Activated naive CD4-positive, alpha-beta T cell treated with anti-CD3 and anti-CD28 coated beads for 36 hours (primary cell): ENCODE measurements at regions of chr7 and their contacts with region 1.

Region 1: DNA sequence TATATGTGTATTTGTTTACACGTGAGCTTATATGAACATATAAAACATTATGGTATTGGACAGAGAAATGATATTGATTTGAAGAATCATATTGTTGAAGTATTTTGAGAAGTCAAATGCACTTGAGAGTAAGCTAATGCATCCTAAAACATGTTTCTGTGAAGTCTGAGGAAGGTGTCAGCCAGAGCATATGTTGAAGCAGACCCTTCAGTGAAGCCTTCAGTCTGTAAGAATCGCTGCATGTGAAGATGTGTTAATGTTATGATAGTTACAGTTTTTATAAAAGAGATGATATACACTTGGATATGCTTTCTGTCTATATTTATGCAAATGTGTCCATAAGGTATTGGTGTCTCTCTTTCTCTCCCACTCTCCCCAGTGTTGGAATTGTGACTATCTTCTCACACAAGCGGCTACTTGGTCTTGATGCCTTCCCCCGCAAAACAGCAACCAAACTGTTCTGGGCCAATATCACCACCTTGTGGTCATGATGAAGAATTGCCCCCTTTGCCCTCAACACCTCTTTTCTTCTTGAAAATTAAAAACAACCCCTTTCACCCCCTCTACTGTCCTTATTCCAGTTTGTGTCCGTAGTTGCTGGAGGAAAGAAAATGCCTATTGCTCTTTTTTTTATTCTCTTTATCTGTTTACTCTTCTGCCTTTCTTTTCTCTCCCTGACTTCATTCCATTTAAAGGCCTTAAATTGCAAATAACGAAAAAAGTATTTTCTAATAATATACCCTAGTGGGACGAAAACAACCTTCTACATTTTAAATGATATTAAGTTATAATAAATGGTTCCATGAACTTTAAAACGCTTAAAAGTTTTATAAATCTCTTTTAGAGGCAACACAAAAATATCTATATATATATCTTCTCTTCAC is 64.9 kb downstream of the IKZF1 start:
- DNase-seq: peak; percentile 67
- H3K4me3 Mint-ChIP-seq: no peak overlapping the region
- H3K27ac Mint-ChIP-seq: peak overlapping the region; percentile 92
- H3K4me1 Mint-ChIP-seq: peaks cover 96% of the 10 kb centered on the region
- H3K27me3 Mint-ChIP-seq: no peaks in the 10 kb centered on the region

Region 2: GRCh38 chr7:50092579-50093491 is 276.6 kb before region 1 on chr7 and contains the start of gene ZPBP:
- CTCF ChIA-PET with region 1: interaction called, 5 read pairs
- intact Hi-C with region 1: loop called (anchors 1 kb)
- DNase-seq: peak; percentile 67
- H3K4me3 Mint-ChIP-seq: peak within 1 kb of the TSS; percentile 76
- H3K27ac Mint-ChIP-seq: peak within 1 kb of the TSS; percentile 81
- H3K4me1 Mint-ChIP-seq: peaks cover 7% of the 10 kb centered on the region
- H3K27me3 Mint-ChIP-seq: no peaks in the 10 kb centered on the region
- total RNA-seq, gene ZPBP: not detected

Region 3: GRCh38 chr7:50156706-50157105 is 212.7 kb before region 1 on chr7:
- CTCF ChIA-PET with region 1: interaction called, 4 read pairs
- intact Hi-C with region 1: loop called (anchors 1 kb)
- DNase-seq: no peak
- H3K4me3 Mint-ChIP-seq: peak overlapping the region; percentile 50
- H3K27ac Mint-ChIP-seq: peak overlapping the region; percentile 92
- H3K4me1 Mint-ChIP-seq: peaks cover 45% of the 10 kb centered on the region
- H3K27me3 Mint-ChIP-seq: no peaks in the 10 kb centered on the region

Region 4: DNA sequence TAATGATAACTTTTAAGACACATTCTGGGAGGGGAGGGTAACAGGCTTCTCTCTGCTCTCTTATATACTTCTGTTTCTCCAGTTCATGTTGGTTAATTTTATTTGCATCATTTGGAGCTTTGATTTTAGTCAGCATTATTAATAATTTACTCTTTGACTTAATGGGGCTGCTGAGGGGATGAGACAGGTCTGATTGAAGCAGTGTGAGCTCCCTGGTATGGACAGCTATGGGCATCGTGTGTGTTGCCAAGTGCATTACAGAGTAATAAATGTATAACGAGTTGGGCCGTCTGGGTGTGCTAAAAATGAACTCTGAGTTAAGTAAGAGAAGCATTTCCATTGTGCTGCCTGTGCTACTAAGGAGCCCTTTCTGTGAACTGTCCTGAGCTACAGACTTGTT is 96.6 kb before region 1 on chr7:
- CTCF ChIA-PET with region 1: interaction called, 13 read pairs
- intact Hi-C with region 1: no loop called
- DNase-seq: no peak
- H3K4me3 Mint-ChIP-seq: no peak overlapping the region
- H3K27ac Mint-ChIP-seq: no peak overlapping the region
- H3K4me1 Mint-ChIP-seq: peaks cover 83% of the 10 kb centered on the region
- H3K27me3 Mint-ChIP-seq: no peaks in the 10 kb centered on the region

Region 5: DNA sequence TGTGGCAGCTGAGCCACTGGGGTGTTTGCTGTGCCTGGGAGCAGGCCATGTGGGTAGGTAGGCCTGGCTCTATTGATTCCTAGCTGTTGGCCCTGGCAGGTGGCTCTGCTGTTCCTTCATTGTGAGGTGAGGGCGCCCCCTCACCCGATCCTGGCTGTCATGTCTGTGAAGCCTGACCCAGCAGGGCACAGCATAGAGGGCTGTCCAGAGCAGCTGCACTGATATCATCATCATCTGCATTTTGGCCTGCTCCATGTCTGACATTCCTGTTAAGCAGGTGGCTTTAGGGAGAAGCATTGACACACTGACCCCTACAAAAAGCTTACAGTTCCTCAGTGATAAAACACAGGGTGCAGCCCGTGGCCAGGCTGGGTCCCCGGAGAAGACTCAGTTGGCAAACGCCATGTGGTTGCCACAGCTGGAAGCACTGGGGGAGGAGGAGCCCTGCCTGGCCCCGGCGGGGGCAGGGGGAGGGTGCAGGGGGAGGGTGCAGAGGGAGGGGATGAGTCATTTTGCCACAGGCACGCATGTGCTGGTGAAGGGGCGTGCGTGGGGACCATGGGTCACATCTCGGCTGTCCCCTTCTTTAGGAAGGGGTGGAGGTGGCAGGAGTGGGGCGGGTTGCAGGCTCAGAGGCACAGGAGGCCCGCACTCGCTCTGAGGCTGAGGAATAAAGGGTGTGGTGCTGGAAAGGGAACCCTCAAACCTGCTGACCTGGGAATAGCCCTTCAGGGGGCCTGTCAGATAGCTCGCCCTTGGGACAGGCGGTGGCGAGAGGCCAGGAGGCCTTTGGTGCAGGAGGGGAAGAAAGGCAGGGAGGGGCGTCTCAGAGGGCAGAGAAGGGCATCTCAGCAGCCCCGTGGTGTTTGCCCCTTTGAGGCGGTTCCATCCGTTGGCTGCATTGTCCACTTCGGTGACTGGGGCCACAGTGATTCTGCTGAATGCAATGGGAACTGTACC is 33.3 kb before region 1 on chr7:
- CTCF ChIA-PET with region 1: interaction called, 264 read pairs
- intact Hi-C with region 1: loop called (anchors 1 kb)
- DNase-seq: peak; percentile 91
- H3K4me3 Mint-ChIP-seq: no peak overlapping the region
- H3K27ac Mint-ChIP-seq: no peak overlapping the region
- H3K4me1 Mint-ChIP-seq: peaks cover 2% of the 10 kb centered on the region
- H3K27me3 Mint-ChIP-seq: no peaks in the 10 kb centered on the region

Region 6: GRCh38 chr7:50397320-50397970 is 28.1 kb after region 1 on chr7:
- CTCF ChIA-PET with region 1: interaction called, 6 read pairs
- intact Hi-C with region 1: loop called (anchors 1 kb)
- DNase-seq: peak; percentile 60
- H3K4me3 Mint-ChIP-seq: no peak overlapping the region
- H3K27ac Mint-ChIP-seq: peak overlapping the region; percentile 78
- H3K4me1 Mint-ChIP-seq: peaks cover 81% of the 10 kb centered on the region
- H3K27me3 Mint-ChIP-seq: no peaks in the 10 kb centered on the region

Region 7: DNA sequence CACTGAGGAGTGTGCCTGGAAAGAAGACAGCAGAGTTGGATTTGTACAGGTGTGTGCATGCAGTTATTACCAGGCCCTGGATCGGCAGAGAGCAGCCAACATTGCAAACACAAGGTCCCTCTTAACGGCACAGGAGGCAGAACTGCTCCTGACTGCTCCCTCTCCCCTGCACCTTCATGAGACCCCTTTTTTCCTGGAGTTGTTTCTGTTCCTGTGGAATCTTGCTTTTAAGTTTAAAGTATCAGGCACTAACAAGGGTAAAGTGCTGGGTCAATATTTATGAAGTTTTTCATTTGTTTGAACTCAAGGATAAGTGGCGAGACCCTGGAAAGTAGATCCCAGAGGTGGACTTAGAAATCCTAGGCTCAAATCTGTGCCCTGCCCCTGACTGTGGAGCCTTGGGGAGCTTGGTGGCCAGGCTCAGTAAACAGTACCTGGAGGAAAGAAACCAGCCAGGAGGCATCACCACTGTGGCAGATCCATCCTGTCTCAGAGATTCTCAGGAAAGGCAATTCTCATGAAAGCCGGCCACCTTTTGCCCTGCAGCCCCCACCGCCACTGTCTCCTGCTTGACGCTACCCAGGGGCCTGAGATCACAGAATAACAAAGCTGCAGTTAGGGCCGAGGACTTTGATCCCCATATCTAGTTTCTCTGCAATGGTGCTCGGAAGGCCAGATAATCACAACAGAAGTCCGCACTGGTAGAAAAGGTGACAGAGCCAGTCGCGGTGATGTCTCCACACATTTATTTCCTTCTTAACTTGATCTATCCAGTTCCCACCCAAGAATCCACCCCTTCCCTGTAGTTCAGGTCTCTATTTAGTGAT is 159.1 kb after region 1 on chr7:
- CTCF ChIA-PET with region 1: no interaction called
- intact Hi-C with region 1: no loop called
- DNase-seq: no peak
- H3K4me3 Mint-ChIP-seq: no peak overlapping the region
- H3K27ac Mint-ChIP-seq: no peak overlapping the region
- H3K4me1 Mint-ChIP-seq: peaks cover 10% of the 10 kb centered on the region
- H3K27me3 Mint-ChIP-seq: peaks cover 2% of the 10 kb centered on the region

Region 8: DNA sequence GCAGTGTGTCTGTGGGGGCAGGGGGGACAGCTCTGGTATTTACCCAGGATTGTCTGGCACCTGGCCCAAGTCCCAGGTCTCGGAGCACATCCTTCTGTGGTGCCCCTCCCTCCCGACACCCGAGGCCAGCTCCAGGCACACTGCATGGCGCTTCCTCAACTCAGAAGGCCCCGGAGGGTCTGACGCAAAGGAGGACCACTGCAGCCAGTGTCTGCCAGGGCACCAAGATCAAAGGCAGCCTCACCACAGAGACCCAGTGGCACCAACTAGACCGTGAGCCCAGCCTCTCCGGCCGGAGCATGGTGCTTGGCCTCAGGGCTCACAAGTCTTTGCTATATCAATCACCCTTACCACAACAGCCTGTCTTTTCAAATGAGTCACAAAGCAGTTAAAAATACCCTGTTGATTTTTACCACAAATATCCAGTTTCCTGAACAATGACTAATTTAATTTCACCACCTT is 295.1 kb after region 1 on chr7:
- CTCF ChIA-PET with region 1: no interaction called
- intact Hi-C with region 1: loop called (anchors 5 kb)
- DNase-seq: peak; percentile 47
- H3K4me3 Mint-ChIP-seq: no peak overlapping the region
- H3K27ac Mint-ChIP-seq: no peak overlapping the region
- H3K4me1 Mint-ChIP-seq: peaks cover 62% of the 10 kb centered on the region
- H3K27me3 Mint-ChIP-seq: no peaks in the 10 kb centered on the region